Endothelial cell of umbilical vein (primary cell): ENCODE measurements at regions of chr4 and their contacts with region 1.

Region 1: GRCh38 chr4:2468445-2469192 is at the start of gene RNF4:
- DNase-seq: peak; percentile 97
- H3K4me3 ChIP-seq: peak within 1 kb of the TSS; percentile 92 to 98 (median 95)
- H3K27ac ChIP-seq: peak within 1 kb of the TSS; percentile 69
- H3K4me1 ChIP-seq: peaks cover 14% of the 10 kb centered on the region
- H3K27me3 ChIP-seq: no peaks in the 10 kb centered on the region
- CTCF ChIP-seq: no peak
- POLR2A ChIP-seq: peak; percentile 86
- total RNA-seq, gene RNF4: 67.5 and 71.4 TPM in 2 replicates

Region 2: GRCh38 chr4:2241410-2242353 is 226.9 kb before region 1 on chr4 and contains the starts of genes HAUS3 and POLN:
- CTCF ChIA-PET with region 1: no interaction called
- POLR2A ChIA-PET with region 1: no interaction called
- dilution Hi-C with region 1: no loop called
- intact Hi-C with region 1: loop called (anchors 5 kb)
- DNase-seq: peak; percentile 98
- H3K4me3 ChIP-seq: peak within 1 kb of the TSS; percentile 63 to 97 (median 97)
- H3K27ac ChIP-seq: peak within 1 kb of the TSS; percentile 30
- H3K4me1 ChIP-seq: peaks cover 33% of the 10 kb centered on the region
- H3K27me3 ChIP-seq: no peaks in the 10 kb centered on the region
- CTCF ChIP-seq: no peak
- POLR2A ChIP-seq: peak; percentile 72
- total RNA-seq, gene HAUS3: 15.9 and 16.0 TPM in 2 replicates
- total RNA-seq, gene POLN: 3.1 and 4.2 TPM in 2 replicates

Region 3: DNA sequence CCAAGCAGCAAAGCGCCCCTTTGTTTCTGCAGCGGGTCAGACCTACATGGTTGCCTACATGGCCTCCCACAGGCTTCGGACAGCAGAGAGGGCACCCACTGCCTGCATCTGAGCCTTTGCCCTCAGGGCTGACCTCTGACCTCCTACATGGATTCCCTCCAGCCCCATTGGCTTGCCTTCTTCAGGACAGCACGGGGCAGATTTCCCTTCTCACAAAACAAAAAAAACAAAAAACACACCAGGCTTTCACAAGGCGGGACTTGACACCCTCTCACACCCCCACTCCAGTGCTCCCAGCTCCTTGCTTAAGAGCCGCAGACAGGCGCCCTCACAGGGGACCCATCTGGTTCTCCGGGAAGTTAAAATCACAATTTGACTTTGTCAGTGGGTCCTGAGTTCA is 83.1 kb before region 1 on chr4:
- CTCF ChIA-PET with region 1: no interaction called
- POLR2A ChIA-PET with region 1: no interaction called
- dilution Hi-C with region 1: no loop called
- intact Hi-C with region 1: no loop called
- DNase-seq: no peak
- H3K4me3 ChIP-seq: no peak overlapping the region
- H3K27ac ChIP-seq: no peak overlapping the region
- H3K4me1 ChIP-seq: no peaks in the 10 kb centered on the region
- H3K27me3 ChIP-seq: no peaks in the 10 kb centered on the region
- CTCF ChIP-seq: no peak
- POLR2A ChIP-seq: no peak

Region 4: DNA sequence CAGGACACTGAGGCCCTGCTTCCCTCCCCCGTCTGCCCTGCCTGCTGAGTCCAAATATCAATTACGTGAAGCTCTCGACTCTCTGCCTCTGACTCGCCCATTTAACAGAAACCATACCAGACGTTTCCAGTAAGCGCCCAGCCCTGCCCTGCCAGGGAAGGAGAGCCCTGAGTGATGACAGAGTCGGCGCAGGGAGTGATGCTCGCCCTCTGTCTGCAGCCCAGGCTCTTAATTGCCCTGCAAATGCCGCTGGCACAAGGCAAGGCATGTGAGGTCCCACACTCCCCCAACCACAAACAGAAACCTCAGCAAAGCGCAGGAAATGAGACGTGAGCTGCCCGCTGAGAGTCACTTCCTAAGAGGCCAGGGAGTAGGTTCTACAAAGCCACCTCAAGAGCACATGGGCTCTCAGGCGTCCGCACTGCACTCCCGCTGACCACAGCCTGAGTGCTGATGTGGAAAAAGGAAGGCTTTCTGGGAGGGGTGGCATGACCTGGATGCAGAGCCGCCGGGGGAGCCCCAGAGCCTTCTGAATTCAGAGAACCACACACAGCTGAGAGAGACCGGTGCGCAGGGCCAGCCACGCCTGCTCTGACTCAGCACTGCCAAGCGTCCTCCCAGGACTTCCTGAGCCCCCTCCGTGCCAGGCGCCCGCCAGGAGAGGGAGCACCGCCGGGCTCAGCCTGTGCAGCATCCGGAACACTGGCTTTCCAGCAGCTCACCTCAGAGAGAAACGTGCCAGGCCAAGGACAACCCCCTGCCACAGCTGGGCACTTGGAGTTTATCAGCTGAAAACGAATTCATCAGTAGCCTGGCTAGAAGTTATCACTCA is 55.5 kb before region 1 on chr4:
- CTCF ChIA-PET with region 1: no interaction called
- POLR2A ChIA-PET with region 1: no interaction called
- dilution Hi-C with region 1: no loop called
- intact Hi-C with region 1: loop called (anchors 2 kb)
- DNase-seq: peak; percentile 96
- H3K4me3 ChIP-seq: peak overlapping the region in 2 of 3 experiments; percentile 18 to 22
- H3K27ac ChIP-seq: peak overlapping the region; percentile 77
- H3K4me1 ChIP-seq: peaks cover 43% of the 10 kb centered on the region
- H3K27me3 ChIP-seq: no peaks in the 10 kb centered on the region
- CTCF ChIP-seq: peak; percentile 49 to 69
- POLR2A ChIP-seq: no peak

Region 5: DNA sequence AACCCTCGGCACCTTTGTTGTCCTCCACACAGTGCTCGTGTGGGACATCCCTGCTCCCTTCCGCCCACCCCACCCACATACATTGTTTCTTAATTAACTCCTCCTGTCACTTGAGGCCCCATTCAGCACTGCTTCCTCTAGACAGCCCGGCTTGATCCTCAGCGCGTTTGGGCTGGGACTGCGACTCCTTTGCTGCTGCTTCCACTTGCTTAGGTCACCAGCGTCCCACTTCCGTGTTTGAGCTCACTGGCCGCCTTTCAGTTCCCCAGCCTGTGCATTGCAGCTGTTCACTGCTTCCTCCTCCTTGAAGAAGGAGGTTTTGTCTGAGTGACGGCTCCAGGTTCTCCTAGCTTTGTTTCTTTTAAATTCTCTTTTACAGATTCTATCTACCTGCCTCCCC is 16.4 kb after region 1 on chr4:
- CTCF ChIA-PET with region 1: interaction called, 14 read pairs
- POLR2A ChIA-PET with region 1: no interaction called
- dilution Hi-C with region 1: no loop called
- intact Hi-C with region 1: loop called (anchors 2 kb)
- DNase-seq: peak; percentile 59
- H3K4me3 ChIP-seq: no peak overlapping the region
- H3K27ac ChIP-seq: peak overlapping the region; percentile 29
- H3K4me1 ChIP-seq: peaks cover 43% of the 10 kb centered on the region
- H3K27me3 ChIP-seq: no peaks in the 10 kb centered on the region
- CTCF ChIP-seq: no peak
- POLR2A ChIP-seq: no peak

Region 6: GRCh38 chr4:2536193-2537010 is 67.8 kb after region 1 on chr4 and contains the start of gene FAM193A:
- CTCF ChIA-PET with region 1: interaction called, 3 read pairs
- POLR2A ChIA-PET with region 1: no interaction called
- dilution Hi-C with region 1: no loop called
- intact Hi-C with region 1: loop called (anchors 2 kb)
- DNase-seq: peak; percentile 100
- H3K4me3 ChIP-seq: peak within 1 kb of the TSS; percentile 75 to 99 (median 88)
- H3K27ac ChIP-seq: peak within 1 kb of the TSS; percentile 81
- H3K4me1 ChIP-seq: peaks cover 9% of the 10 kb centered on the region
- H3K27me3 ChIP-seq: no peaks in the 10 kb centered on the region
- CTCF ChIP-seq: no peak
- POLR2A ChIP-seq: peak; percentile 46
- total RNA-seq, gene FAM193A: 32.0 and 32.1 TPM in 2 replicates

Region 7: DNA sequence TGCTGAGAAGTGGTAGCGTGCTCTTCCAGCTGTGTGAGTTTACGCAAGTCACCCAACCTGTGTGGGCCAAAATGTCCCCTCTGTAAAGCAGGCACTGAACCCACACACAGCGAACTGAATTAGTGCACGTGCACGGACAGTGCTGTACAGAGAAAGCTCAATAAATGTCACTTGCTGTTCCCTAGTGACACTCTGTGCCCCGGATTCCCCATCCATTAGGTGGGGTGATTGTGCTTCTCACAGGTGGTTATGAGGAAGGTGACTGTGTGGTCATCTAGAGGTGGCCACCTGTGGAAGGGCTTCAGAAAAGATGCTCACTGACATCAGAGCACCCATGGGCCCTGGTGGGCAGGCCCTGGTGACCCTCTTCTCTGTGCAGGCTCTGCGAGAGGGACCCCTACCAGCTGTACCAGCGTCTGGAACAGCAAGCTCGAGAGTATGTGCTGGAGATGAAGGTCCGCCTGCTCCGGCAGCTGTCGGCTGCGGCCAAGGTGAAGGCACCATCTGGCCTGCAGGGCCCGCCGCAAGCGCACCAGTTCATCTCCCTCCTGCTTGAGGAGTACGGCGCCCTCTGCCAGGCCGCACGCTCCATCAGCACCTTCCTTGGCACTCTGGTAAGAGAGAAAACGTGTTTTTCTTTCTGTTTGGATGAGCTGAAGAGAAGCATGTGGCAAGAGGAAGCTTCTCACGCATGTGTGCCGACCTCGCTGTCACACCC is 162.1 kb after region 1 on chr4:
- CTCF ChIA-PET with region 1: no interaction called
- POLR2A ChIA-PET with region 1: no interaction called
- dilution Hi-C with region 1: no loop called
- intact Hi-C with region 1: no loop called
- DNase-seq: no peak
- H3K4me3 ChIP-seq: no peak overlapping the region
- H3K27ac ChIP-seq: no peak overlapping the region
- H3K4me1 ChIP-seq: no peaks in the 10 kb centered on the region
- H3K27me3 ChIP-seq: no peaks in the 10 kb centered on the region
- CTCF ChIP-seq: no peak
- POLR2A ChIP-seq: no peak

Region 8: GRCh38 chr4:2712261-2712842 is 243.7 kb after region 1 on chr4:
- CTCF ChIA-PET with region 1: no interaction called
- POLR2A ChIA-PET with region 1: no interaction called
- dilution Hi-C with region 1: no loop called
- intact Hi-C with region 1: no loop called
- DNase-seq: no peak
- H3K4me3 ChIP-seq: no peak overlapping the region
- H3K27ac ChIP-seq: no peak overlapping the region
- H3K4me1 ChIP-seq: peaks cover 23% of the 10 kb centered on the region
- H3K27me3 ChIP-seq: no peaks in the 10 kb centered on the region
- CTCF ChIP-seq: peak in 1 of 2 donors; percentile 4
- POLR2A ChIP-seq: no peak

Region 9: DNA sequence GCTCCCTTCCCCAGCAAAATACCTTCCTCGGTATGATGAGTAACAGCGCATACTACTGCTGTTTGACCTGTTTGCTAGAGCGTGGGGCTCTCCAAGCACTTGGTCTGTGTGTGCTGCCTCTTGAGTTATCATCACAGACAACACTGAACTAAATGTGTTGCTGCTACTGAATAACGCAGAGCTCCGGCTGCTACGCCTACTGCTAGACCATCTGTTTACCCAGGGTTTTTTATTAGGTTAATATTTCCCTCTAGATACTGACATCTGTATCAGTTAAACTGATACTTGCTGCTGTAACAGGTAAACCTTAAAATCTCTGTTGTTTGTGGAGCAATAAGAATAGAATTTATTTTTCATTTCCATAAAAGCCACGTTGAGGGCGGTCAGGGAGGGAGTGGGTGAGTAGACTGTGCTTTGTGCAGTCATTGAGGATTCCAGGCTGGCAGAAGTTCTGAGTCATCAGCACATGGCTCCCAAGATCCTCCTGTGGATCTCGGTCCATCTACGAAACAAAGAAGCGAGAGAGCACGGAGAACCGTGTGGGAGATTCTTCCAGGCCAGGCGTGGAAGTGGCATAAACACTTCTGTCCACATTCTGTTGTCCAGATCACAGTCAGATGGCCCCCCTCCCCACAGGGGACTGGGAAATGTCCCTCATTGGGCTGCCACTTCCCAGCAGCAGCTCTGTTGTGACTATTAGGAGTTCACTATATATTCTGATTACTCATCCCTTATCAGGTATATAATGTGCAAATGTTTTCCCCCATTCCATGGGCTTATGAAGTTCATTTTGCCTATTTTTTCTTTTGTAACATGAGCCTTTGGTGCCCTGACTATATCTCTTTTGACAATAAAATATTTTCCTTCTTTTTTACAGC is 508.8 kb after region 1 on chr4:
- CTCF ChIA-PET with region 1: no interaction called
- POLR2A ChIA-PET with region 1: no interaction called
- dilution Hi-C with region 1: no loop called
- intact Hi-C with region 1: no loop called
- DNase-seq: no peak
- H3K4me3 ChIP-seq: no peak overlapping the region
- H3K27ac ChIP-seq: no peak overlapping the region
- H3K4me1 ChIP-seq: no peaks in the 10 kb centered on the region
- H3K27me3 ChIP-seq: peaks cover 0 to 3% of the 10 kb centered on the region in 2 experiments
- CTCF ChIP-seq: no peak
- POLR2A ChIP-seq: no peak